Heart left ventricle (tissue), 16 donors: ENCODE measurements at regions of chr18 and their contacts with region 1.

Region 1: GRCh38 chr18:48777026-48777743 is 173.6 kb downstream of the SMAD7 start:
- DNase-seq: peak; percentile 62 to 84 (median 69)
- ATAC-seq: peak in 1 of 4 donors; percentile 15
- H3K4me3 ChIP-seq: no peak overlapping the region
- H3K27ac ChIP-seq: peak overlapping the region in 3 of 12 donors; percentile 17 to 42 (median 39)
- H3K4me1 ChIP-seq: peaks cover 16 to 89% (median 66%) of the 10 kb centered on the region in 12 donors
- H3K27me3 ChIP-seq: no peaks in the 10 kb centered on the region
- CTCF ChIP-seq: peak; percentile 78 to 96 (median 88)
- POLR2A ChIP-seq: no peak

Region 2: GRCh38 chr18:47420130-47420529 is 1357.1 kb before region 1 on chr18:
- intact Hi-C with region 1: no loop called
- DNase-seq: no peak
- ATAC-seq: no peak
- H3K4me3 ChIP-seq: no peak overlapping the region
- H3K27ac ChIP-seq: no peak overlapping the region
- H3K4me1 ChIP-seq: no peaks in the 10 kb centered on the region
- H3K27me3 ChIP-seq: peaks cover 0 to 33% (median 11%) of the 10 kb centered on the region in 9 donors
- CTCF ChIP-seq: no peak
- POLR2A ChIP-seq: no peak

Region 3: DNA sequence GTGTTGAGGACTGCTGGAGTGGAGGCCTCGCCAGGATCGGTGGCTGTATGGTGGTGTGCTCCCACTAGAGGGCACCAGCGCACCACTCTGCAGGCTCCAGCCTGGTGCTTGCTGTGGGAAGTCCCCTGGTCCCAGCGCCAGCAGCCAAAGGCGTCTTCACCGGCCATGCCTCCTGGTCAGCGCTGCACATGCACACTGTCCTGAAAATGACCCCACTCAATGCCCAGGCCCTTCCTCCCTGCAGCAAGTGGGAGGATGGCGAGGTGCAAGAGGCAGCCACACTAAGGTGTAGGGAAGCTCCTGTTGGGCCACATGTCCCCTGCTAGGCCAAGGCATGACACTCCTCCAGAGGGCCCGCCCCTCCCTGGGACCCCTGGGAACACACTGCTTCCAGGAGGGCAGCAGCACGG is 101.8 kb before region 1 on chr18:
- intact Hi-C with region 1: loop called in 7 of 10 experiments (anchors 2 to 10 kb)
- DNase-seq: peak; percentile 86 to 93 (median 89)
- ATAC-seq: peak; percentile 84 to 92 (median 90)
- H3K4me3 ChIP-seq: no peak overlapping the region
- H3K27ac ChIP-seq: peak overlapping the region in 2 of 12 donors; percentile 13 to 56
- H3K4me1 ChIP-seq: peaks cover 8 to 69% (median 55%) of the 10 kb centered on the region in 12 donors
- H3K27me3 ChIP-seq: no peaks in the 10 kb centered on the region
- CTCF ChIP-seq: peak; percentile 90 to 99 (median 95)
- POLR2A ChIP-seq: no peak

Region 4: GRCh38 chr18:48797841-48798255 is 20.7 kb after region 1 on chr18:
- intact Hi-C with region 1: loop called in 1 of 10 experiments (anchors 2 kb)
- DNase-seq: peak in 4 of 5 donors; percentile 56 to 89 (median 71)
- ATAC-seq: peak; percentile 89 to 93 (median 90)
- H3K4me3 ChIP-seq: no peak overlapping the region
- H3K27ac ChIP-seq: peak overlapping the region; percentile 24 to 92 (median 76)
- H3K4me1 ChIP-seq: peaks cover 7 to 59% (median 30%) of the 10 kb centered on the region in 12 donors
- H3K27me3 ChIP-seq: no peaks in the 10 kb centered on the region
- CTCF ChIP-seq: peak in 2 of 12 donors; percentile 8 to 17
- POLR2A ChIP-seq: peak in 1 of 2 donors; percentile 41

Region 5: GRCh38 chr18:48851599-48851960 is 74.4 kb after region 1 on chr18:
- intact Hi-C with region 1: loop called in 2 of 10 experiments (anchors 5 to 10 kb)
- DNase-seq: peak; percentile 79 to 83 (median 82)
- ATAC-seq: peak; percentile 52 to 83 (median 75)
- H3K4me3 ChIP-seq: peak overlapping the region in 3 of 12 donors; percentile 13 to 15 (median 14)
- H3K27ac ChIP-seq: peak overlapping the region; percentile 53 to 95 (median 88)
- H3K4me1 ChIP-seq: peaks cover 5 to 65% (median 43%) of the 10 kb centered on the region in 12 donors
- H3K27me3 ChIP-seq: no peaks in the 10 kb centered on the region
- CTCF ChIP-seq: no peak
- POLR2A ChIP-seq: no peak

Region 6: DNA sequence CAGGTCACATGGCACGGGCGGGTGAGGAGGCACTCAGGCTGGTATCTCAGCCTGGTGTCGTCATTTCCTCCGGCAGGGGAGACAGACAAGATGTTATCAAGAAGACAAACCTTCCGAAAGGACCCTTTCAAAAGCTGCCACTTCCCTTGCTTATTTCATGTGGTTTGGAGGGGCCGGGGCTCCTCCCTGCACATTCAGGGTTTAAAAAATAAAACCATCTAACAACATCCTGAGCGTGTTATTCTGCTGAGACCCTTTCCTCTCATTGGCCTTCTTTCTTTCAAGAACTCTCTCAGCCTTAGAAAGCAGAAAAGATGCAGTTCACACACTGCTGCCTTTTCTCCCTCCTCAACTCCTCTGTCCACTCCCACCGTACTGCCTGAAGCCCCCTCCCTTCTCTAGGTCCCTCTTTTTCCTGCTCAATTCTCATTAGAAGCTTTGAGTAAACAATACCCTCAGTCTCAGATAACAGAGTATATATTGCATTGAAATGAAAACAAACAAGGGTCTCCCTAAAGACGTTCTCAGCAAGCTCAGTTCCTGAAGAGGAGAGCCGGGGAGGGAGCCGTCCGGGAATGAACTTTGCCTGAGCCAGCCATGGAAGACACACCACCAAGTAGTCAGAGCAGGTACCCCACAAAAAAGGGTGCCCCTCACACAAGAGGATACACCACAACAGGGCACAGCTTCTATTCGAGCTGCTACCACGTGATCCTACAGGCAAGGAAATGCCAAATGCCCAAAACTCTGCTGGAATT is 163.8 kb after region 1 on chr18:
- intact Hi-C with region 1: loop called in 5 of 10 experiments (anchors 5 kb)
- DNase-seq: no peak
- ATAC-seq: peak in 1 of 4 donors; percentile 5
- H3K4me3 ChIP-seq: peak overlapping the region in 5 of 12 donors; percentile 25 to 96 (median 91)
- H3K27ac ChIP-seq: peak overlapping the region in 11 of 12 donors; percentile 22 to 100 (median 75)
- H3K4me1 ChIP-seq: peaks cover 19 to 98% (median 93%) of the 10 kb centered on the region in 12 donors
- H3K27me3 ChIP-seq: no peaks in the 10 kb centered on the region
- CTCF ChIP-seq: no peak
- POLR2A ChIP-seq: no peak

Region 7: DNA sequence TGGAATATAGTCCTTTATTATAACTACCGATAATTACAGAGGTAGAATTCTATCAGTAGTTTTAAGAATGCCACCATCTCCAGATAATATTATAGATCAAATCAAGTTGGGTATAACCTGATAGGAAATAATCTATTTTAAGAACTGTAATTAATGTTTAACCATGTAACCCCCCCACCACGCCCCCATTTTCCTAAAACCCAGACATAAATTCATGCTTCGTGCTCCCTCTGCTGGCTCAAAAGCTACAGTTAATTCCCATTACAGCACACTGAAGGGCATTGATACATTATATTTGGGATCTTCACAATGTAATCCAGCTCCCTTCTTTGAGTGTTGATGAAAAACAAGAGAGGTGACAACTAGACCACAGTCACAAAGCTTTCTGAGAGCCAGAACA is 401.6 kb after region 1 on chr18:
- intact Hi-C with region 1: loop called in 3 of 10 experiments (anchors 10 kb)
- DNase-seq: peak in 1 of 5 donors; percentile 27
- ATAC-seq: no peak
- H3K4me3 ChIP-seq: no peak overlapping the region
- H3K27ac ChIP-seq: no peak overlapping the region
- H3K4me1 ChIP-seq: peaks cover 0 to 27% (median 0%) of the 10 kb centered on the region in 12 donors
- H3K27me3 ChIP-seq: no peaks in the 10 kb centered on the region
- CTCF ChIP-seq: peak; percentile 18 to 65 (median 54)
- POLR2A ChIP-seq: no peak